CD4-positive, alpha-beta T cell (primary cell): ENCODE measurements at regions of chr17 and their contacts with region 1.

Region 1: DNA sequence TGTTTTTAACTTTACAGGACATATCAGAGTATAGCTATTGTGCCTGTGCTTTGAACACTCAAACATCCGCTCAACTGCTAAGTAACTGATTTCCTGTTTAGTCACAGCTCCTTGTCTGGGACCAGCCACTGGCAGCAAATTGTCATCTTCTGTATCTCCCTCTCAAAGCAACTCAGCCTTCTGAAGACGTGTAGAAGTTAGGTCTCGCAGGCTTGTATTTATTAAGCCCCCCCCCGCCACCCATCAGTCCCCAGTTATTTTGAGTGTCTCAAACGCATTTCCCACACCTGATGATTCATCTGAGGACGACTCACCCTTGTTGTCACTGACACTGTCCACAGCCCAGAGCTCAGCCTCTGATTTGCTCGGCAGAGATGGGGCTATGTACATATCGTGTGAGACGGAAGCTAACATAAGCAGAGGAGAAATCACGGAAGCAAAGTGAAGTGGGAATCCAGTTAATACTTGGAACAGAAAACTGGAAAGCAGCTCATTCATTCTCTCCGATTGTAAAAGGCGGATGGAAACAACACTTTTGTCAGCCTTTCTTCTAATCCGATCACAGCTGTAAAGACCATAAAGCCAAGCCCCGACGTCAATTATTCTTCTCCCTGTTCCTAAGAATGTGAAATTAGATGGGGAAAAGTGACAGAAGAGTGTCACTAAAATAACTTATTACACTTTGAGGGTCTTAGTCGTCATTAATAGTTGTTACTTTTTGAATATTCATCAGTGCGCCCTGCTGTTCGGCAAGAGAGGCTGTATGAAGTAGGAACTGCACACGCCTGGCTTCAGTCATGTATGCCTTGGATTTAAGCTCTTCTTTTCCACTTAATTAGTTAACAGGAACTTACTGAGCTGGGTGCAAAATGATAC is 64.2 kb downstream of the PITPNC1 start:
- DNase-seq: peak; percentile 65 to 93 (median 79)
- ATAC-seq: peak; percentile 86
- H3K4me3 ChIP-seq: peak overlapping the region; percentile 43
- H3K4me3 Mint-ChIP-seq: peak overlapping the region; percentile 80
- H3K27ac ChIP-seq: peak overlapping the region; percentile 89 to 93
- H3K27ac Mint-ChIP-seq: peak overlapping the region; percentile 91
- H3K4me1 ChIP-seq: peaks cover 94% of the 10 kb centered on the region
- H3K4me1 Mint-ChIP-seq: peaks cover 89% of the 10 kb centered on the region
- H3K27me3 ChIP-seq: no peaks in the 10 kb centered on the region
- H3K27me3 Mint-ChIP-seq: no peaks in the 10 kb centered on the region
- CTCF ChIP-seq: no peak

Region 2: GRCh38 chr17:67082107-67082506 is 359.2 kb before region 1 on chr17:
- CTCF ChIA-PET with region 1: no interaction called
- POLR2A ChIA-PET with region 1: no interaction called
- intact Hi-C with region 1: no loop called
- DNase-seq: peak in 3 of 14 experiments; percentile 52 to 67 (median 56)
- ATAC-seq: peak; percentile 89
- H3K4me3 ChIP-seq: no peak overlapping the region
- H3K4me3 Mint-ChIP-seq: no peak overlapping the region
- H3K27ac ChIP-seq: no peak overlapping the region
- H3K27ac Mint-ChIP-seq: peak overlapping the region; percentile 81
- H3K4me1 ChIP-seq: peaks cover 16% of the 10 kb centered on the region
- H3K4me1 Mint-ChIP-seq: peaks cover 37% of the 10 kb centered on the region
- H3K27me3 ChIP-seq: no peaks in the 10 kb centered on the region
- H3K27me3 Mint-ChIP-seq: no peaks in the 10 kb centered on the region
- CTCF ChIP-seq: no peak

Region 3: GRCh38 chr17:67390646-67391384 is 50.5 kb before region 1 on chr17:
- CTCF ChIA-PET with region 1: interaction called, 3 read pairs
- POLR2A ChIA-PET with region 1: interaction called, 28 read pairs
- intact Hi-C with region 1: no loop called
- DNase-seq: peak; percentile 39 to 83 (median 60)
- ATAC-seq: peak; percentile 82
- H3K4me3 ChIP-seq: peak overlapping the region; percentile 20
- H3K4me3 Mint-ChIP-seq: peak overlapping the region; percentile 86
- H3K27ac ChIP-seq: peak overlapping the region; percentile 50 to 55
- H3K27ac Mint-ChIP-seq: peak overlapping the region; percentile 92
- H3K4me1 ChIP-seq: peaks cover 56% of the 10 kb centered on the region
- H3K4me1 Mint-ChIP-seq: peaks cover 78% of the 10 kb centered on the region
- H3K27me3 ChIP-seq: no peaks in the 10 kb centered on the region
- H3K27me3 Mint-ChIP-seq: no peaks in the 10 kb centered on the region
- CTCF ChIP-seq: no peak

Region 4: DNA sequence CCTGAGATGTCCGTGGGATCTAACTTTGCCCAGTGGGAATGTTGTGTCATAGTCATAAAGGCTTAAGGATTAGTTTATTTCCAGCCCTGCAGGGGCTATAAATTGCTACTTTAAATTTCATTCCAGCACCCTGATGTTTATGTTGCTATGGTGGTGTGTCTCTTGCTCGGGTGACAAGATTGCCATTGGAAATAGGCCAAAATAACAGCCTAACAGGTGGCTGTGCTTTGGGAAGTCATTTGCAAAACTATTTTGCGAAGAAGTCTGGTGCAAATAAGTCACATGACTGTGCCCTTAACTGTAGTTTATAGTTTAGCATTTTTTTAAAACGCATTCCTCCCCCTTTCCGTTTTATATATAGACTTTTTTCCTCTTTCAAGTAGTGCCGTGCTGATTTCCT is 41.1 kb before region 1 on chr17:
- CTCF ChIA-PET with region 1: no interaction called
- POLR2A ChIA-PET with region 1: interaction called, 18 read pairs
- intact Hi-C with region 1: loop called (anchors 2 to 5 kb)
- DNase-seq: peak in 4 of 14 experiments; percentile 34 to 72 (median 60)
- ATAC-seq: peak; percentile 50
- H3K4me3 ChIP-seq: no peak overlapping the region
- H3K4me3 Mint-ChIP-seq: peak overlapping the region; percentile 65
- H3K27ac ChIP-seq: peak overlapping the region; percentile 31 to 77
- H3K27ac Mint-ChIP-seq: peak overlapping the region; percentile 99
- H3K4me1 ChIP-seq: peaks cover 52% of the 10 kb centered on the region
- H3K4me1 Mint-ChIP-seq: peaks cover 77% of the 10 kb centered on the region
- H3K27me3 ChIP-seq: no peaks in the 10 kb centered on the region
- H3K27me3 Mint-ChIP-seq: no peaks in the 10 kb centered on the region
- CTCF ChIP-seq: no peak

Region 5: DNA sequence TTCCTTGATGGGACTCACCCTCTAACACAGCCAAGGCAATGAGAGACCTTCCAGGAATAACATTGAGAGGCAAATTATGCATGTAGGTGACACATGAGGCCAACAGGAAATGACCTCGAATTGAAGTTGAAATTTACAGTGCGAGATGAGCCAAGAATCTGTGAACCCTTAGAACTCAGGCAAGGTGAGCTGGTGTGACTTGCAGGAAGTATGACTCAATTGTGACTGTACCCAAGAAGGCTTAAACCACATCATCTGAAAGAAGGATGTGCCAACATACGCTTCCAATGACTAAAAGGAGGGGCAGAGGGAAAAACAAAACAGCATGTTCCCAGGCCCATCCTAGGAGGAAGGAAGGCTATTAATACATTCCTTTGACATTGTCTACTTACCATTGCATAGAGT is 19.4 kb before region 1 on chr17:
- CTCF ChIA-PET with region 1: interaction called, 18 read pairs
- POLR2A ChIA-PET with region 1: interaction called, 71 read pairs
- intact Hi-C with region 1: loop called in 1 of 2 experiments (anchors 2 kb)
- DNase-seq: peak in 11 of 14 experiments; percentile 22 to 94 (median 61)
- ATAC-seq: peak; percentile 93
- H3K4me3 ChIP-seq: no peak overlapping the region
- H3K4me3 Mint-ChIP-seq: peak overlapping the region; percentile 16
- H3K27ac ChIP-seq: peak overlapping the region; percentile 68 to 88
- H3K27ac Mint-ChIP-seq: peak overlapping the region; percentile 87
- H3K4me1 ChIP-seq: peaks cover 80% of the 10 kb centered on the region
- H3K4me1 Mint-ChIP-seq: peaks cover 90% of the 10 kb centered on the region
- H3K27me3 ChIP-seq: no peaks in the 10 kb centered on the region
- H3K27me3 Mint-ChIP-seq: no peaks in the 10 kb centered on the region
- CTCF ChIP-seq: no peak

Region 6: DNA sequence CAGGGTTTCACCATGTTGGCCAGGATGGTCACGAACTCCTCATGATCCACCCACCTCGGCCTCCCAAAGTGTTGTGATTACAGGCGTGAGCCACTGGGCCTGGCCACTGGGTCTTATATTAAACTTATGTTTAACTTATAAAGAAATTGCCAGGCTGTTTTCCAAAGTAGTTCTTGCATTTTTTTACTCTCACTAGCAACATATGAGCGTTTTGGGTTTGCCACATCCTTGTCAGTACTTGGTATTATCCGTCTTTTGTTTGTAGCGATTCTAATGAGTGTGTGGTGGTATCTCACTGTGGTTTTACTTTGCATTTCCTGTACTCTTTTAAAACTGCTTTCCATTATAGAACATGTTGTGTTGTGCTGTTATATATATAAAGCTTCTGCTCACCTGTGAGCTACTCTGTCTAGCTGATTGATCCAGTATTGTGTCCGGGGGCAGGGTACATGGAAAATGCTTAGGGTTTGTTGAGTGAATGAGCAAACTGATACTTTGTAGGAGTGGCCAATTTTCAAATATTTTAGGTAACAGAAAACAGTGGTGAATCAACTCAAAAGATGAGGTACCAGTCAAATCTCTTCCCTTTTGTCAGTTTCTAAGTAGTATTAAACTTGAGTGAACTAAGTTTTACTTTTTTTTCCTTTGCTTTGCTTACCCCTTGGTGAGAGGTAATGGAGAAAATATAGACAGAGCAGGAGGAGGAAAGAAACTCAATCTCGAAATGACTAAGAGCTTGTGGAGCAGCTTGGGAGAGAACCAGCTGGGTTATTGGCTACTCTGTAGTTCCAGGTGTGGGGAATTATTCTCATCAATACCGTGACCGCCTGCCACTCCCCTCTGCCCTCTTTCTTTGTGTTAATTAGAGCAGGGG is 11.6 kb after region 1 on chr17:
- CTCF ChIA-PET with region 1: interaction called, 9 read pairs
- POLR2A ChIA-PET with region 1: interaction called, 182 read pairs
- intact Hi-C with region 1: loop called in 1 of 2 experiments (anchors 1 kb)
- DNase-seq: peak in 3 of 14 experiments; percentile 74 to 91 (median 76)
- ATAC-seq: peak; percentile 90
- H3K4me3 ChIP-seq: peak overlapping the region; percentile 9
- H3K4me3 Mint-ChIP-seq: peak overlapping the region; percentile 85
- H3K27ac ChIP-seq: peak overlapping the region; percentile 20 to 71
- H3K27ac Mint-ChIP-seq: peak overlapping the region; percentile 91
- H3K4me1 ChIP-seq: peaks cover 81% of the 10 kb centered on the region
- H3K4me1 Mint-ChIP-seq: peaks cover 95% of the 10 kb centered on the region
- H3K27me3 ChIP-seq: no peaks in the 10 kb centered on the region
- H3K27me3 Mint-ChIP-seq: no peaks in the 10 kb centered on the region
- CTCF ChIP-seq: no peak

Region 7: DNA sequence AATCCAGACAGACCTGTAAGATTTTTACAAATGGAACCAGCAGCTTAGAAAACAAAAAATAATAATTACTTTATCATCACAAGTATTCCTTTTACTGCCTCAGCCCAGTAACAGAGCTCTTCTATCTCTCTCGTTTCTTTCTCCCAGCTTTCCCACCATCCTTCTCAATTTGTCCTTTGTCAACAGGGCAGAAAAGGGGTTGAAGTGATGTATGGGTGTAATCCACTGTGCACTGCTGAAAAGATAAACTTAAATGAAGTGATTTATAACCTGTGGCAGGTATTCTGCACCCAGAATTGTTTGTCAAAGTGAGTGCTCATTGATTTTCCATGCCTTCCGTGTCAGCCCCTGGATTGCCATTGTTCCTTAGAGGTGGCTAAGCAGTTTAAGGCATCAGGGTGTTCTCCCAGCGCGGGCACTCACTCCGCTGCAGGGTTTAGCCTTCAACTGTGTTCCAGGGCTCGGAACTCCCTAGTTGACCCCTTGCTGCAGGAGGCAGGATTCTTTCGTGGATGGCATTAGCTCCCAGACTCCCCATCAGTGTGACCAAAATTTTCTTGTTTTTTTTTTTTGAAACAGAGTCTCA is 18.7 kb after region 1 on chr17:
- CTCF ChIA-PET with region 1: interaction called, 9 read pairs
- POLR2A ChIA-PET with region 1: interaction called, 182 read pairs
- intact Hi-C with region 1: no loop called
- DNase-seq: no peak
- ATAC-seq: no peak
- H3K4me3 ChIP-seq: no peak overlapping the region
- H3K4me3 Mint-ChIP-seq: no peak overlapping the region
- H3K27ac ChIP-seq: no peak overlapping the region
- H3K27ac Mint-ChIP-seq: peak overlapping the region; percentile 60
- H3K4me1 ChIP-seq: peaks cover 55% of the 10 kb centered on the region
- H3K4me1 Mint-ChIP-seq: peaks cover 74% of the 10 kb centered on the region
- H3K27me3 ChIP-seq: no peaks in the 10 kb centered on the region
- H3K27me3 Mint-ChIP-seq: no peaks in the 10 kb centered on the region
- CTCF ChIP-seq: no peak

Region 8: DNA sequence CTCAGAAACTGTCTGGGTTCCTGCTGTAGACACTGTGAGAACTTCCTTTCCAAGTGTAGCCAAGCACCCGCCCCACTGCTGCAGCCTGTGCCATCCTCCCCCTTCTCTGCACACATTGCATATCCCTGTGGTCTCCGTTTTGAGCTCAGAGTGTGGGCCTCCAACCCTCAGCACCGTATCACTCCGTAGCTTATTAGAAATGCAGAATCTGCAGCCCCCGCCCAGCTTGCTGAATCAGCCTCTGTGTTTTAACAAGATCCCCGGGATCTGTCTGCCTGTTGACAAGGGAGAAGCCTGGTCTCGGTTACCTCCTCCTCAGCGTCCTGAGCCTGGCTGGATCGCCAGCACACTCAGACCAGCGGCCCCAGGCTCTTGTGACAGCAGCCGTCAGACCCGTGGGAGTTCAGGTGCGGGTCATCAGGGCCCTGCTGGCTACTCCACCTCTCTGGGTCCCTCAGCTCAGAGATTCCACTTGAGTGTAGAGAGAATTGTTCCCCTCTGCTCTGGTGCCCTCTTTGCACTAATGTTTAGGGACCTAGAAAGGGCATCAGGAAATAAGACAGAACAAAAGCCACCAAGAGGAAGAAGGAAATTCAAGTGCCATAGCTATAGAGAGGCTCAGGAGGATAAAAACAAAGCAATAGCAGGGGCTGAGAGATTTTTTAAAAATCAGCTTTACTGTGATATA is 28.1 kb after region 1 on chr17:
- CTCF ChIA-PET with region 1: interaction called, 80 read pairs
- POLR2A ChIA-PET with region 1: interaction called, 91 read pairs
- intact Hi-C with region 1: no loop called
- DNase-seq: peak in 8 of 14 experiments; percentile 23 to 56 (median 44)
- ATAC-seq: peak; percentile 53
- H3K4me3 ChIP-seq: peak overlapping the region; percentile 16
- H3K4me3 Mint-ChIP-seq: peak overlapping the region; percentile 66
- H3K27ac ChIP-seq: peak overlapping the region; percentile 61 to 67
- H3K27ac Mint-ChIP-seq: peak overlapping the region; percentile 83
- H3K4me1 ChIP-seq: peaks cover 68% of the 10 kb centered on the region
- H3K4me1 Mint-ChIP-seq: peaks cover 71% of the 10 kb centered on the region
- H3K27me3 ChIP-seq: no peaks in the 10 kb centered on the region
- H3K27me3 Mint-ChIP-seq: no peaks in the 10 kb centered on the region
- CTCF ChIP-seq: no peak

Region 9: DNA sequence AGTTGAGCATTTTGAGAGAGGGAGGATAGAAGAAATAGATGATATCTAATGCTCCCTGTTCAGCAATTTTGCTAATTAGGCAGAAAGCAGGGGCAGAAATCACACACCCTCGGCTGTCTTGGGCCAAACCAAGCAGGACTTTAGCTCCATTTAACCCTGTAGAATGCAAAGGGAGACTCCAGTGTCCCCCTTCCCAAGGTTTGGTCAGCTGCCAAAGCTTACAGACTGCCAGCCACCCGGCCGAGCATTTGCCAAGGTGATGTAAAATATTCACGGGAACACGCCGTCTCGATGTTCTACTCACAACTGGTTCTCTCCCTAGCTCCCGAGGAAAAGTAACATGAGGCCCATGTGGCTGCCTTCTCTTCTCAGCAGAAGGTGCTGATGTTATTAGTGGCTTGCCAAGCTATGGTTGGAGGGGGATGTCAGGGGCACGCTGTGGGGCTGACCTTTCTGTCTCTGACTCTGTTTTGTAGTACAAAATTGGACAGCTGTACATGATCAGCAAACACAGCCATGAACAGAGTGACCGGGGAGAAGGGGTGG is 91.1 kb after region 1 on chr17:
- CTCF ChIA-PET with region 1: no interaction called
- POLR2A ChIA-PET with region 1: no interaction called
- intact Hi-C with region 1: no loop called
- DNase-seq: no peak
- ATAC-seq: no peak
- H3K4me3 ChIP-seq: no peak overlapping the region
- H3K4me3 Mint-ChIP-seq: no peak overlapping the region
- H3K27ac ChIP-seq: no peak overlapping the region
- H3K27ac Mint-ChIP-seq: no peak overlapping the region
- H3K4me1 ChIP-seq: peaks cover 13% of the 10 kb centered on the region
- H3K4me1 Mint-ChIP-seq: peaks cover 22% of the 10 kb centered on the region
- H3K27me3 ChIP-seq: no peaks in the 10 kb centered on the region
- H3K27me3 Mint-ChIP-seq: no peaks in the 10 kb centered on the region
- CTCF ChIP-seq: no peak